BJ (cell line): ENCODE measurements at regions of chr1 and their contacts with region 1.

Region 1: DNA sequence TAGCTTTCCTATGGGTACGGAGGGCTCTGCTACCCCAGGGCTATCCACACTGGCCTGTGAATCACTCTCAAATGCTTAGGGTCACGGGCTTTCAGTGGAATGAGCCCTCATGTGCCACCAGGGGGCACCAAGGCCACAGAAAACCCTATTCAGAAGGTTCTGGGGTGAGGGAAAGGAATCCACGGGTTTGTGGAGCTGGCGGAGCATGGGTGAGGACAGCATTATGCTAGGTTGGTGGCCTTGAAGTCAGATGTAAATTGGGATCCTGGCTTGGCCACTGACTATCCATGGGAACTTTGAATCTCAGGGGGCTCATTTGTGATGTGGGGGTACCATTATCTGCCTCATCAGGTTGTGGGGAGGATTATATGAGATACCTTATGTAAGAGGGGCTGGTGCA is 5.1 kb upstream of the LAMTOR5 start:
- DNase-seq: no peak
- H3K4me3 ChIP-seq: no peak overlapping the region
- H3K27me3 ChIP-seq: peaks cover 3% of the 10 kb centered on the region; the same call in 1 of the 2 replicates
- CTCF ChIP-seq: peak; percentile 88

Region 2: GRCh38 chr1:110203021-110203661 is 209.4 kb before region 1 on chr1:
- CTCF ChIA-PET with region 1: interaction called, 29 read pairs
- POLR2A ChIA-PET with region 1: no interaction called
- DNase-seq: no peak
- H3K4me3 ChIP-seq: no peak overlapping the region
- H3K27me3 ChIP-seq: no peaks in the 10 kb centered on the region
- CTCF ChIP-seq: peak; percentile 79

Region 3: DNA sequence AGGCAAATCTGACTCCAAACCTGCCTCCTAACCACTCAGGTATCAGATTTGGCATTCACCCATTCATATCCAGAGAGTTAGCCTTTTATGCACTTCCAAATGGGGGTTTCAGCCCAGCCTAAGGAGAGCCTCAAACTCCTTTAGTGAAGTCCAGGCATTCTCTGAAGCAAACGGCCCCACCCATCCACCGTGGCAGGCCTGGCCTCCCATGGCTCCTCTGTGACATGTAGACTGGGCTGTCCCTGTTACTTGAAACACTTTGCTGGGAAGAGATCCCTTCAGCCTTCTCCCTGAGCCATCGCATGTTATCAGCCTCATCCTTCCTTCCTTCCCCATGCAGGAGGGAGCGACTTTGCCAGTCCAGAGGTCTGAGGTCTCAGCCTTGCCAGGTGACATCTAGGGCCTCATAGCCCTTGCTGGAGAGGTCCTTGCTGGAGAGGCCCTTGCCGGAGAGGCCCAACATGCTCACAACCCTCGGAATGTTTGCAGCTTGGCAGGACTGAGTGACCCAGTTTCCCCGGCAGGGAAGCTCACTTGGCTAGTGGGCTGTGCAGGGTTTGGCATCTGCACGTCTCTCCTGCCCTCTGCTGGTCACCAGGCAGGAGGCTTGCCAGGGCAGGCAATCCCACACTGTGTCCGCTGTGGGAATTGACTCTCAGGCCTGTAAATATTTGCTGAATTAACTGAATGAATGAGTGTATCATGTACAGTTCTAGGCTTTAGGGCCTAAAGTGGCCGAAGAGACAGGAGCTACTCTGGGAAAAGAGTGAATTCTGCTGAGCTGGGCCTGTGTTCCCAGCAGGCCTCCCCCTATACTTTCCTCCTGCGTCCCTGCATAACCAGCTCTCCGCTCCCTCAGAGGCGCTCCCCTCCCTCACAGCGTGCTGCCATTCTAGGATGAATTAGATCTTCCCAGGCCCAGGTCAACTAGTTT is 100.1 kb before region 1 on chr1:
- CTCF ChIA-PET with region 1: interaction called, 13 read pairs
- POLR2A ChIA-PET with region 1: no interaction called
- DNase-seq: peak; percentile 13
- H3K4me3 ChIP-seq: no peak overlapping the region
- H3K27me3 ChIP-seq: no peaks in the 10 kb centered on the region
- CTCF ChIP-seq: peak; percentile 97

Region 4: GRCh38 chr1:110328274-110328673 is 84.3 kb before region 1 on chr1:
- CTCF ChIA-PET with region 1: no interaction called
- POLR2A ChIA-PET with region 1: no interaction called
- DNase-seq: no peak
- H3K4me3 ChIP-seq: no peak overlapping the region
- H3K27me3 ChIP-seq: no peaks in the 10 kb centered on the region
- CTCF ChIP-seq: no peak

Region 5: GRCh38 chr1:110433803-110434202 is 21.2 kb after region 1 on chr1:
- CTCF ChIA-PET with region 1: interaction called, 26 read pairs
- POLR2A ChIA-PET with region 1: no interaction called
- DNase-seq: no peak
- H3K4me3 ChIP-seq: no peak overlapping the region
- H3K27me3 ChIP-seq: peaks cover 7% of the 10 kb centered on the region
- CTCF ChIP-seq: peak; percentile 44

Region 6: GRCh38 chr1:110440877-110441276 is 28.3 kb after region 1 on chr1:
- CTCF ChIA-PET with region 1: interaction called, 24 read pairs
- POLR2A ChIA-PET with region 1: interaction called, 3 read pairs
- DNase-seq: no peak
- H3K4me3 ChIP-seq: no peak overlapping the region
- H3K27me3 ChIP-seq: peaks cover 1% of the 10 kb centered on the region
- CTCF ChIP-seq: no peak

Region 7: DNA sequence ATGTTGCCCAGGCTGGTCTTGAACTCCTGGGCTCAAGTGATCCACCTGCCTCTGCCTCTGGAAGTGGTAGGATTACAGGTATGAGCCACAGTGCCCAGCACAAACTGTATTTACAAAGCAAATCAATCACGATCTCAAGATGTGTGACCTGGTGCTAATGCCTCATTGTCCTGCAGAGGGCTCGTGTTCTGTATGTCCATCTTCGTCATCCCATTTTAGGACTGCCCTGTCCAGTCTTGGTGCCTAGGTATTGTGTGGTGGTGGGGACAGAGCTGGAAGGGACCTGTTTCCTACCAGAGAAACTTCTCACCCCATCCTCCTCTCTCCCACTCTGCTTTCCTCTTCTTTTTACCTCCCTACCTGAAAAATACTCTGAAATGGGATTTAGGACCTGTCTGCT is 58.6 kb after region 1 on chr1:
- CTCF ChIA-PET with region 1: interaction called, 296 read pairs
- POLR2A ChIA-PET with region 1: no interaction called
- DNase-seq: no peak
- H3K4me3 ChIP-seq: no peak overlapping the region
- H3K27me3 ChIP-seq: peaks cover 5% of the 10 kb centered on the region
- CTCF ChIP-seq: no peak